Pancreas (tissue), 10 donors: ENCODE measurements at regions of chr9 and their contacts with region 1.

Region 1: DNA sequence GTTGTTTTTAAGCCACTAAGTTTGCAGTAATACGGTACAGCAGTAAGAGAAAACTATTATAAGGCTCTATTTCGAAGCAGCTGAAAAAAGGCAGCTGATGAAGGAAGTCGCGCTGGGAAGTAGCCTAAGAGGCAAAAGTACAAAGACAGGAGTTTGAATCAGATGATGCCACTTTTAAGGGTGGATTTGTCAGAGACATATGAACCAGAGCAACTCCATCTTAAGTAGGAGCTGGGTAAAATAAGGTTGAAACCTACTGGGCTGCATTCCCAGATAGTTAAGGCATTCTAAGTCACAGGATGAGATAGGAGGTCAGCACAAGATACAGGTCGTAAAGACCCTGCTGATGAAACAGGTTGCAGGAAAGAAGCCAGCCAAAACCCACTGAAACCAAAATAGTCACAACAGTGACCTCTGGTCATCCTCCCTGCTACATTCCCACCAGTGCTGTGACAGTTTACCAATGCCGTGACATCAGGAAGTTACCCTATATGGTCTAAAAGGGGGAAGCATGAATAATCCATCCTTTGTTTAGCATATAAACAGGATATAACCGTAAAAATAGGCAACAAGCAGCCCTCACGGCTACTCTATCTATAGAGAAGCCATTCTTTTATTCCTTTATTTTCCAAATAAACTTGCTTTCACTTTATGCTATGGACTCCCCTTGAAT is 91.8 kb upstream of the PRSS3 start:
- DNase-seq: no peak
- ATAC-seq: no peak
- H3K4me3 ChIP-seq: no peak overlapping the region
- H3K27ac ChIP-seq: no peak overlapping the region
- H3K4me1 ChIP-seq: peaks cover 0 to 6% (median 0%) of the 10 kb centered on the region in 3 donors
- H3K27me3 ChIP-seq: no peaks in the 10 kb centered on the region
- CTCF ChIP-seq: no peak

Region 2: GRCh38 chr9:33517373-33517772 is 186.2 kb before region 1 on chr9:
- intact Hi-C with region 1: no loop called
- DNase-seq: peak in 2 of 6 donors; percentile 12 to 23
- ATAC-seq: peak; percentile 53 to 86 (median 82)
- H3K4me3 ChIP-seq: no peak overlapping the region
- H3K27ac ChIP-seq: no peak overlapping the region
- H3K4me1 ChIP-seq: no peaks in the 10 kb centered on the region
- H3K27me3 ChIP-seq: peaks cover 0 to 7% (median 0%) of the 10 kb centered on the region in 4 donors
- CTCF ChIP-seq: peak in 3 of 4 donors; percentile 29 to 66 (median 47)

Region 3: GRCh38 chr9:33659921-33660320 is 43.6 kb before region 1 on chr9:
- intact Hi-C with region 1: loop called in 1 of 3 experiments (anchors 10 kb)
- DNase-seq: no peak
- ATAC-seq: peak in 1 of 4 donors; percentile 18
- H3K4me3 ChIP-seq: no peak overlapping the region
- H3K27ac ChIP-seq: no peak overlapping the region
- H3K4me1 ChIP-seq: no peaks in the 10 kb centered on the region
- H3K27me3 ChIP-seq: no peaks in the 10 kb centered on the region
- CTCF ChIP-seq: no peak

Region 4: GRCh38 chr9:33750307-33750838 is 46.8 kb after region 1 on chr9:
- intact Hi-C with region 1: no loop called
- DNase-seq: peak in 2 of 6 donors; percentile 63 to 65
- ATAC-seq: peak in 3 of 4 donors; percentile 58 to 76 (median 66)
- H3K4me3 ChIP-seq: peak overlapping the region in 1 of 4 donors; percentile 12
- H3K27ac ChIP-seq: no peak overlapping the region
- H3K4me1 ChIP-seq: peaks cover 0 to 4% (median 0%) of the 10 kb centered on the region in 3 donors
- H3K27me3 ChIP-seq: no peaks in the 10 kb centered on the region
- CTCF ChIP-seq: no peak

Region 5: DNA sequence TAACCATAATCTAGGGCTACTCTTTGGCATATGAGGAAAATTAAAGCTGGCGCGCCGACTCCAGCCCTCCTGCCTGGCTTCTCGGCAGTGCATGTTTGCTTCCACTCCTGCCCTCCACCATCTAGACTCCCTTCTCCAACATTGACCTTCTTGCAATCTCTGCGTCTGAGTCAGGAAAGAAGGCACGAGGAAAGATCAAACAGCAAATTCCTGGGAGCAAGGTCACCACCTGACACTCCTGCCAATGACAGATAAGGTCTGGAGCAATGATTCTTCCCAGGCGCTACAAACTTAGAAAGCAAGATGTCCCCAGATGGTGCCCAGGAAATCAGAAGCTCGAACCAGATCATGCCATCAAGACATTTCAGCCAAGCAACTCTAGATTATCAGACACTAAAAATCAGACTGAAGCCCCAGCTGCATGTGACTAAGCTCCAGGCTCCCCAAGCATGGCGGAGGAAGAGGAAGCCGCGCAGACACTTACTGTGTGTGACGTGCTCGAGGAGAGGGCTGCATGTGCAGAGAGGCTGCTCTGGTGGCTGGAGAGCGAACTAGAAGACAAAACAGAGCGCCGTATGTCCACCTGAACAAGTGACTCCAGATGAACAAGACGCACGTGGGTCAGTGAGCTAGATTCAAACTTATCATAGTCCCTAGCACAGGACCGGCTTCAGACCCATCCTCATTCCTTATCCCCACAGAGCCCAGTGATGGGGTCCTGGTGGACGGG is 228.7 kb after region 1 on chr9:
- intact Hi-C with region 1: no loop called
- DNase-seq: no peak
- ATAC-seq: peak in 3 of 4 donors; percentile 39 to 61 (median 52)
- H3K4me3 ChIP-seq: no peak overlapping the region
- H3K27ac ChIP-seq: no peak overlapping the region
- H3K4me1 ChIP-seq: no peaks in the 10 kb centered on the region
- H3K27me3 ChIP-seq: no peaks in the 10 kb centered on the region
- CTCF ChIP-seq: no peak

Region 6: GRCh38 chr9:33972698-33973097 is 269.1 kb after region 1 on chr9:
- intact Hi-C with region 1: no loop called
- DNase-seq: no peak
- ATAC-seq: no peak
- H3K4me3 ChIP-seq: no peak overlapping the region
- H3K27ac ChIP-seq: no peak overlapping the region
- H3K4me1 ChIP-seq: peaks cover 0 to under 1% (median 0%) of the 10 kb centered on the region in 3 donors
- H3K27me3 ChIP-seq: no peaks in the 10 kb centered on the region
- CTCF ChIP-seq: no peak